ENCODE measurements at regions of chr1 and their contacts with region 1.

Region 1: DNA sequence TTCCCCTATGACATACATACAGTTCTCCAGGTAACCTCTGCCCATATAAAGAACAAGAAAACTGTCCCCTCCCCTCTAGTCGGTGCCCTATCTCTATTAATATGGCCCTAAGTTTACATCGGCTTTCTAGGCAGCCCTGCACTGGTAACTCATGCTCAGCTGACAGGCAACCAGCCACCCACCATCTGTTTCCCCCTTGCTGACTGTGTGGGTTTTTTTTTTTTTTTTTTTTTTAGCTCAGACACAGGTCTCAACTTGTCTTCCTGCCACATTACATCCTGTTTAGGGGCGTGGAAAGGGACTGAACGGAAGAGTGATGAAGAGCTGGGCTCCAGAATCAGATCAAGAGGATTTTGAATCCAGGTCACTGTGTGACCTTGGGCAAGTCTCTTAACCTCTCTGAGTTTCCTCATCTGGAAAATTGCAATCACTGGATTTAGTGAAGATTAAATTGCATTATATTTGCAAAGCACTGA is 14.0 kb downstream of the LAPTM5 start:
- DNase-seq: peak; percentile 90 to 98 (median 97)
- H3K4me3 ChIP-seq: peak overlapping the region in 2 of 7 experiments; percentile 0 to 20
- H3K27ac ChIP-seq: peak overlapping the region in 1 of 2 experiments; percentile 56
- H3K4me1 ChIP-seq: peaks cover 14 to 98% (median 93%) of the 10 kb centered on the region in 4 experiments
- H3K27me3 ChIP-seq: no peaks in the 10 kb centered on the region

Region 2: GRCh38 chr1:30732277-30732996 is 11.2 kb before region 1 on chr1:
- CTCF ChIA-PET with region 1: interaction called, 9 read pairs
- POLR2A ChIA-PET with region 1: interaction called, 27 read pairs
- DNase-seq: peak; percentile 38 to 78 (median 64)
- H3K4me3 ChIP-seq: no peak overlapping the region
- H3K27ac ChIP-seq: no peak overlapping the region
- H3K4me1 ChIP-seq: peaks cover 0 to 16% (median 5%) of the 10 kb centered on the region in 4 experiments
- H3K27me3 ChIP-seq: no peaks in the 10 kb centered on the region

Region 3: DNA sequence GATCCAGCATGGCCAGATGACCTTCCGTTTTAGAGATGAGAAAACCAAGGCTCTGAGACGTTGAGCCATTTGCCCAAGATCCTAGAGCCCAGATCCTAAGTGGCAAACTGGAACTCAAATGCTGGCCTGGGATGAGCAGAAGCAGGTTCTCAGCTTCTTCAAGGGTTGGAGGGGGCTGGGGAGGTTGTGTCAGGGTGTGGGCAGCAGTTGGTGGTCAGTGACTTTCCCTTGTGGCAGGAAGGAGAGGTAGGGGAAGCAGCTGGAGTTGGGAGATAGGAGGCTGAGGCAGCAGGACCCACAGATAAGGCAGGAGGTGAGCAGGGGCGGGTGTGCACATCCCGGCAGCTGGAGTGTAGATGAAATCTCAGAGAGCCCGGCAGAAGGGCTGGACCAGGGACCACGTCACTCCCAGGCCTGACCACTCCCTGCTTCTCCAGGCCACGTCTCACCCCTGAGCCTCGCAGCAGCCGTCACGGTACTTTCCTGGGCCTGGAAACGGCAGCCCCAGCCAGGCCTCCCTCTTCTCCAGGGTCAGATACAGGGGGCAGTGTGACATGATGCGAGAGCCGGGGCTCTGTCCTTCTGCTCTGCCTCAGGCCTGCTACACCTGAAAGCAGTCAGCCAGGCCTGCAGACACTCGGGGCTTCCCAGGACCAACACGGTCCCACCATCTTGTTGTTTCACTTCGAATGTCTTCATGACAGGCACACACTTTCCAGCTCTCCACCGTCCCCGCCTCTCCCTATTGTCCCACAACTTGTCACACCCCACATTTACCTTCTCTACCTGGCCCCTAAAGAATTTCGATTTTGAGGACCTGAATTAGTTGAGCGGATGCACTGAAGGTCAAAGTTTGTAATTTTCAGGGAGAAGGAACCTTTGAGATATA is 25.5 kb after region 1 on chr1:
- CTCF ChIA-PET with region 1: interaction called, 152 read pairs
- POLR2A ChIA-PET with region 1: interaction called, 19 read pairs
- DNase-seq: peak; percentile 94 to 99 (median 99)
- H3K4me3 ChIP-seq: peak overlapping the region in 3 of 7 experiments; percentile 2 to 54 (median 13)
- H3K27ac ChIP-seq: peak overlapping the region in 1 of 2 experiments; percentile 83
- H3K4me1 ChIP-seq: peaks cover 9 to 35% (median 31%) of the 10 kb centered on the region in 4 experiments
- H3K27me3 ChIP-seq: no peaks in the 10 kb centered on the region

Measured in common myeloid progenitor, CD34-positive (primary cell).